ENCODE measurements at regions of chrX and their contacts with region 1.

Region 1: DNA sequence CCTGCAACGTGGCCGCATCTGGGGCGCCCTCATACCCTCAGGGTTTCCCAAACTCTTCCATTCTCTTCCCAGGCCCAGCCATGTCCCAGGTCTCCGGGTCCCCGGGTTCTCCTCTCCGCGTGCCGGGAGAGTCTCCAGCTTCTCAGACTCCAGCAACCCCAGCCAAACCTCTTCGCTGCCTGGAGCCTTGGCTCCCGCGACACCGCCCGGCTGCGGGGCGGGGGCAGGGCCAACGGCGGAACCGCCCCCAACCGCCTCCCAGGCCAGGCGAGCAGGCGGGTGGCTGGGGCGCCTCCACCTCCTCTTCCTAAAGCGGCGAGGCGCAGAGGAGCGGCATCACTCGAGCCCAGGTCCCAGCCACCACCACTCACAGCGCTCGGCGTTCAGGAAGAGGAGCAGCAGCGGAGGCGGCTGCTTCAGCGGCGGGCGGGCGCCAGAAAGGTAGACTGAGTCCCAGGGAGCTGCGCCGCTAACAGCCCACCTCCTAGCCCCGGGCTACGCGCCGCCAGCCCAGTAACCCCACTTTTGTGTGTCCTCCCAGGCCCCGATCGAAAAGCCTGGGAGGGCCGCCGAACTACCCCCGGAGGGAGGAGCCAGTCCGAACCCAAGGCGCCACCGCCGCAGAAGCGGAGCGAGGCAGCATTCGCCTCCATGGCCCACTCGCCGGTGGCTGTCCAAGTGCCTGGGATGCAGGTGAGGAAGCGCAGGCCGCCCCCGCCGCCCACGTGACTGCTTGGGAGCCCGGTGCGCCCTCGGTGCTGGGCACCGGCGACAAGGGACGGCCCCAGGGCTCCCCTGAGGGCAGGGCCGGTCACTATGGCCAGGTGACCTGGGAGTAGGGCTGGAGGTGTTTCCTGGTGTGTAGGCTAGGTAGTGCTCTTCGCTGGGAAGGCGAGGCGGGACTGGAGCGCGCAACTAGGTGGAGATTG is at the start of gene STK26:
- DNase-seq: peak; percentile 64 to 86
- ATAC-seq: peak; percentile 78 to 93 (median 82)
- H3K4me3 ChIP-seq: peak within 1 kb of the TSS; percentile 94
- H3K4me3 Mint-ChIP-seq: peak within 1 kb of the TSS; percentile 89
- H3K27ac ChIP-seq: peak within 1 kb of the TSS; percentile 90
- H3K27ac Mint-ChIP-seq: peak within 1 kb of the TSS; percentile 81 to 91
- H3K4me1 ChIP-seq: peaks cover 17% of the 10 kb centered on the region
- H3K4me1 Mint-ChIP-seq: peaks cover 32 to 37% of the 10 kb centered on the region in 2 donors
- H3K27me3 ChIP-seq: no peaks in the 10 kb centered on the region
- H3K27me3 Mint-ChIP-seq: peaks cover 0 to 10% of the 10 kb centered on the region in 2 donors
- CTCF ChIP-seq: no peak
- total RNA-seq, gene STK26: 62.5 to 81.0 (median 66.5) TPM

Region 2: GRCh38 chrX:131987252-131987651 is 36.0 kb before region 1 on chrX:
- intact Hi-C with region 1: loop called (anchors 2 kb)
- DNase-seq: peak in 1 of 2 donors; percentile 72
- ATAC-seq: peak; percentile 93 to 96 (median 94)
- H3K4me3 ChIP-seq: no peak overlapping the region
- H3K4me3 Mint-ChIP-seq: peak overlapping the region; percentile 74
- H3K27ac ChIP-seq: peak overlapping the region; percentile 94
- H3K27ac Mint-ChIP-seq: peak overlapping the region; percentile 84 to 92
- H3K4me1 ChIP-seq: peaks cover 41% of the 10 kb centered on the region
- H3K4me1 Mint-ChIP-seq: peaks cover 60 to 65% of the 10 kb centered on the region in 2 donors
- H3K27me3 ChIP-seq: no peaks in the 10 kb centered on the region
- H3K27me3 Mint-ChIP-seq: peaks cover 0 to 45% of the 10 kb centered on the region in 2 donors
- CTCF ChIP-seq: no peak

Region 3: GRCh38 chrX:132009350-132009749 is 13.9 kb before region 1 on chrX:
- intact Hi-C with region 1: no loop called
- DNase-seq: no peak
- ATAC-seq: no peak
- H3K4me3 ChIP-seq: no peak overlapping the region
- H3K4me3 Mint-ChIP-seq: no peak overlapping the region
- H3K27ac ChIP-seq: no peak overlapping the region
- H3K27ac Mint-ChIP-seq: no peak overlapping the region
- H3K4me1 ChIP-seq: no peaks in the 10 kb centered on the region
- H3K4me1 Mint-ChIP-seq: peaks cover 10 to 13% of the 10 kb centered on the region in 2 donors
- H3K27me3 ChIP-seq: no peaks in the 10 kb centered on the region
- H3K27me3 Mint-ChIP-seq: peaks cover 0 to 33% of the 10 kb centered on the region in 2 donors
- CTCF ChIP-seq: no peak

Region 4: DNA sequence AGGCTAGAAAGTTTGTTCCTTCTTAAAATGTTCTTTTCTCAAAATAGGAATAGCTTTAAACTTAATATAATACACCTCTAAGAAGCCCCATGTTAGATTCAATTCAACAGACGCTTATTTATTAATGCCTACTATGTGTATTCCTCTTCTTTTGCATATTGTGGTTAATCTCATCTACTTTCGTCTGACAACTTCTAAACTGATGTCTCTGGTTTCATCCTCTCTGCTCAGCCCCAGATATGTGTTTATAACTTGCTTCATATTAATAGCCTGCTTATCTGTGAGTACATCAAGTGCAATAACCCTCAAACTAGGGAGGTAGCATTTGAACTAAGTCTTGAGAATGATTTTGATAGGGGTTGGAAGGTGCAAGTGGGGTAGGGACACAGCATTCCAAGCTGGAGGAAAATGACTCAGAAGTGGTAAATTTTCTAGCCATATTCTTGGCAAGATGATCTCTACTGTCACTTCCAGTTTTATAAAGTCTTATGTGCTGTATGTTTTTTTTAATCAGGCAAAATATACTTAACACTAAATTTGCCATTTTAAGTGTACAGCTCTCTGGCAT is 36.8 kb after region 1 on chrX:
- intact Hi-C with region 1: loop called (anchors 1 kb)
- DNase-seq: no peak
- ATAC-seq: peak in 1 of 3 donors; percentile 50
- H3K4me3 ChIP-seq: no peak overlapping the region
- H3K4me3 Mint-ChIP-seq: no peak overlapping the region
- H3K27ac ChIP-seq: no peak overlapping the region
- H3K27ac Mint-ChIP-seq: peak overlapping the region; percentile 20 to 76
- H3K4me1 ChIP-seq: no peaks in the 10 kb centered on the region
- H3K4me1 Mint-ChIP-seq: peaks cover 11 to 34% of the 10 kb centered on the region in 2 donors
- H3K27me3 ChIP-seq: no peaks in the 10 kb centered on the region
- H3K27me3 Mint-ChIP-seq: peaks cover 0 to 17% of the 10 kb centered on the region in 2 donors
- CTCF ChIP-seq: no peak